Testis (tissue), 5 donors: ENCODE measurements at regions of chr1 and their contacts with region 1.

Region 1: DNA sequence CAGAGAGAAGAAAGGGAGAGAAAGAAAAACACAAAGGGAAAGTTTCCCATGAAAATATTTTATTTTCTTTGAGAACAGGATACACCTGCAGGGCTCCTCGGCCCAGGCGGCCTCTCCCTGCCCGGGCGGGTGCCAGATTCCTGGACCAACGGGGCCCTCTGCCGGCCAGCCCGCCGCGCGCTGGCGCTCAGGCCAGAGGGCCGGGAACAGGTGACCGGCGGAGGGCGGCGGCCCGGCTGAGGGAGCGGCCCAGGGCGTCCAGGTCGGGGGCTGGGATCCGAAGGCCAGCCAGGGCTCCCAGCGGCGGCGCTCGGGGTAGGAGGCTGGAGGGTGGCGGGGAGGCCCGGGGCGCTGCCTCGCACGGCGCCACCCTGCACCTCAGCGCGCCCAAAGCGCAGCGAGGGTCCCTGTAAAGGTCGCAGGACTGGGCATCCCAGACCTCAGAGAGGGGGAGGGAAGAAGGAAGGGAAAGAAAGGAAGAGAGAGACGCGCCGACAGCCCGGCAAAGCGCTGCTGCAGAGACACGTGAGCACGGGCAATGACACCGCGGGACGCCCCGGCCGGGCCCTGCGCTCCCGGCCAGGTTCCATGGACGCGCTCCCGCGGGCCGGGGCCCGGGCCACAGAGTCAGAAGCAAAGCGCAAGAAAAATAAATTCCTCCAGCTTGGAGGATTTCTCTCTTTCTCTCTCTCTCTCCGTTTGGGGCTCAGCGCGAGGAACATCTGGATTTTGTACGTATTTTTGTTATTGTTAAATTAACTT is 927 bp downstream of the WNT9A start:
- DNase-seq: peak; percentile 78
- H3K4me3 ChIP-seq: peak overlapping the region; percentile 51 to 58
- H3K27ac ChIP-seq: peak overlapping the region; percentile 70 to 74
- H3K4me1 ChIP-seq: peaks cover 23% of the 10 kb centered on the region
- H3K27me3 ChIP-seq: no peaks in the 10 kb centered on the region
- CTCF ChIP-seq: peak; percentile 74 to 81 (median 75)
- POLR2A ChIP-seq: no peak

Region 2: GRCh38 chr1:227299241-227299627 is 647.6 kb before region 1 on chr1:
- intact Hi-C with region 1: no loop called
- DNase-seq: no peak
- H3K4me3 ChIP-seq: no peak overlapping the region
- H3K27ac ChIP-seq: peak overlapping the region; percentile 4 to 40
- H3K4me1 ChIP-seq: peaks cover 7% of the 10 kb centered on the region
- H3K27me3 ChIP-seq: no peaks in the 10 kb centered on the region
- CTCF ChIP-seq: no peak
- POLR2A ChIP-seq: no peak

Region 3: GRCh38 chr1:227489572-227489971 is 457.2 kb before region 1 on chr1:
- intact Hi-C with region 1: loop called (anchors 10 kb)
- DNase-seq: no peak
- H3K4me3 ChIP-seq: no peak overlapping the region
- H3K27ac ChIP-seq: no peak overlapping the region
- H3K4me1 ChIP-seq: no peaks in the 10 kb centered on the region
- H3K27me3 ChIP-seq: no peaks in the 10 kb centered on the region
- CTCF ChIP-seq: no peak
- POLR2A ChIP-seq: no peak

Region 4: GRCh38 chr1:227762233-227762911 is 184.4 kb before region 1 on chr1:
- intact Hi-C with region 1: loop called (anchors 2 kb)
- DNase-seq: peak; percentile 86
- H3K4me3 ChIP-seq: no peak overlapping the region
- H3K27ac ChIP-seq: no peak overlapping the region
- H3K4me1 ChIP-seq: no peaks in the 10 kb centered on the region
- H3K27me3 ChIP-seq: no peaks in the 10 kb centered on the region
- CTCF ChIP-seq: peak; percentile 71 to 83 (median 83)
- POLR2A ChIP-seq: no peak

Region 5: DNA sequence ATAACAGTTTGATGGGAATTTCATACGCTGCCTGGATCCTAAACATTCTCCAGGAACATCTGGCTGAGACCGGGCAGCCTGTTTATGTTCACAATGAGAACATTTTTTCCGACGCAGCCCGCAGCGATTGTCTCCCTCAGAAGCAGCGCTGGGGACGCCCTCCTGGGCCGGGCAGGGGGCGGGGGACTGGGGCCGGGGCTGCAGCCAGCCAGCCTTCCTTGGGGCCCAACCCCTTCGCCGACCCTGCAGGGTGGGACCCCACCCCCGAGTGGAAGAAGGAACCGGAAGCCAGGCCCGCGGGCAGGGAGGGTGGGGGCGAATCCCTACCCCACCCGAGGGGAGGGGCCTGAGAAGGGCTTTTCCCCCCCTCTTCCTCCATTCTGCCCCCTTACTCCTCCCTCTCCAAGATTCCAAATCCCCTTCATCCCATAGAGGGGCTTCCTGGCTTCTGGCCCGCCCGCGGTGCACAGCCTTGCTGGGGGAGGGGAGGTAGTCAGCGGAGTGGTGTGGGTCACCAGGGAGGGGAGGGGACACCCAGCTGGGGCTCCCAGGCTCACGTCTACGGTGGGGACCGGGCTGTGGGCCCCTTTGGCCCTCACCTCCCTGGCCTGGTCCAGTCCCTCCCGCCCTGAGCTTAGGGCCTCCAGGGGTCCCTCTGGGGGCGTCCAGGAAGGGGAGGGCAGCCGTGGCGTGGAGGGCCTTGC is 59.7 kb before region 1 on chr1:
- intact Hi-C with region 1: loop called (anchors 5 kb)
- DNase-seq: peak; percentile 72
- H3K4me3 ChIP-seq: peak overlapping the region; percentile 49 to 69
- H3K27ac ChIP-seq: peak overlapping the region; percentile 86 to 88
- H3K4me1 ChIP-seq: peaks cover 17% of the 10 kb centered on the region
- H3K27me3 ChIP-seq: no peaks in the 10 kb centered on the region
- CTCF ChIP-seq: no peak
- POLR2A ChIP-seq: no peak